A673 (cell line): ENCODE measurements at regions of chr15 and their contacts with region 1.

Region 1: DNA sequence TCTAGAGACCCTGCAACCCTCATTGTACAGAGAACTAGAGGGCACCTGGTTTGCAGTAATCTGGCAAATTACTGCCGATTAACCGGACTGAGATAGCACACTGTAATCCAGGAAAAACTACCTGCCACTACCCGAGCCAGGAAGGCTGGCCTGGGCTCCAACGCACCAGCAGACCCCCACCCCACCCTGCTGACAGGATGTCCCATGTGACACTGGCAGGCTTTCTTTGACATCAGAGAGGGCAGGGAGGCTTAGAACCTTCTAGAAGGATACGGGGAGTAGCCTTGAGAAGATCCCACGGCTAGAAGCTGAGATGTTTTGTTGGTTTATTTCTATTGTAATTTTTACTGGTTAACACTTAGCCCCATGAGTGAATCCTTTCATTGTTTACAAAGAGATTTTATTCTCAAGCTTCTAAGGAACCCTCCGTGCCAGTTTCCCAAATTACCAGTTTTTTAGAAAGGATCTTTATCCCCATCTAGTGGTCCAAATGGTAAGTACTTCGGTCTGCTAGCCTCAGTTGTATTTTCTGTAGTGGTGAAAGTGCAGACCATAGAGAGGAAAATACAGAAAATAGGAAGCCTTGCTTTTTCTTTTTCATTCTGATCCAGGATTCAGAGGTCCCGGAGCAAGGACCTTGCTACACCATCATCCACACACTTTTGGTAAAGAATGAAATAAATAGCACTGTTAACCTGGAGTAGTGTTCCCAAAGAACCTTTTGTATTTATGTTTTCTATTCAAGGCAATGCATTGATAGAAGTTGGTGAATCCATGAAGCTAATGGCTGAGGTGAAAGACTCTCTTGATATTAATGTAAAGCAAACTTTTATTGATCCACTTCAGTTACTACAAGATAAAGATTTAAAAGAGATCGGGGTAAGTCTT is 81.9 kb upstream of the ADAMTSL3 start:
- DNase-seq: peak; percentile 65
- H3K4me3 ChIP-seq: no peak overlapping the region
- H3K27ac ChIP-seq: no peak overlapping the region
- H3K4me1 ChIP-seq: no peaks in the 10 kb centered on the region
- H3K27me3 ChIP-seq: no peaks in the 10 kb centered on the region
- CTCF ChIP-seq: peak; percentile 70

Region 2: GRCh38 chr15:83747050-83747717 is 175.1 kb after region 1 on chr15:
- CTCF ChIA-PET with region 1: no interaction called
- POLR2A ChIA-PET with region 1: no interaction called
- intact Hi-C with region 1: loop called (anchors 5 kb)
- DNase-seq: peak; percentile 21
- H3K4me3 ChIP-seq: no peak overlapping the region
- H3K27ac ChIP-seq: no peak overlapping the region
- H3K4me1 ChIP-seq: no peaks in the 10 kb centered on the region
- H3K27me3 ChIP-seq: no peaks in the 10 kb centered on the region
- CTCF ChIP-seq: peak; percentile 34; the same call in 1 of the 2 replicates

Region 3: DNA sequence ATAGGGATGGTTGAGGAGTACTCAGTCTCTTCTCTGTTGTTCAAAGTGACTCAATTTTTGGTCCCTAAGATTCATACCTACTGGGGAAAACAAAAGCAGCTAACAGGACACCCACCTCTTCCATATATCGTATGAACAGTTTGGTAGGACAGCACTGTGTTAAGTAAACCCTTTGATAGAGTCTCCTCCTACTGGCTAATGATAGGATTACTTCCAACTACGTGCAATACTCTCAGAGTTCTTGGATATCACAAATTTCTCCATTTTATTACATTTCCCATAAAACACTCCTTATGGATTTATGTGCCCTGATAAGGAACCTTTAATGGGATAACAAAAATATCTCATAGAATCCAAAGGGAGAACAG is 463.3 kb after region 1 on chr15:
- CTCF ChIA-PET with region 1: no interaction called
- POLR2A ChIA-PET with region 1: no interaction called
- intact Hi-C with region 1: loop called (anchors 5 kb)
- DNase-seq: peak; percentile 59
- H3K4me3 ChIP-seq: no peak overlapping the region
- H3K27ac ChIP-seq: no peak overlapping the region
- H3K4me1 ChIP-seq: no peaks in the 10 kb centered on the region
- H3K27me3 ChIP-seq: peaks cover 7% of the 10 kb centered on the region
- CTCF ChIP-seq: peak; percentile 57